HEK293 (cell line): ENCODE measurements at regions of chr20 and their contacts with region 1.

Region 1: GRCh38 chr20:45934586-45935415 is at the start of gene PCIF1:
- H3K4me3 ChIP-seq: peak within 1 kb of the TSS; percentile 96
- H3K27ac ChIP-seq: peak within 1 kb of the TSS; percentile 98
- H3K4me1 ChIP-seq: peaks cover 9% of the 10 kb centered on the region
- CTCF ChIP-seq: no peak; the same call in 1 of the 2 replicates

Region 2: DNA sequence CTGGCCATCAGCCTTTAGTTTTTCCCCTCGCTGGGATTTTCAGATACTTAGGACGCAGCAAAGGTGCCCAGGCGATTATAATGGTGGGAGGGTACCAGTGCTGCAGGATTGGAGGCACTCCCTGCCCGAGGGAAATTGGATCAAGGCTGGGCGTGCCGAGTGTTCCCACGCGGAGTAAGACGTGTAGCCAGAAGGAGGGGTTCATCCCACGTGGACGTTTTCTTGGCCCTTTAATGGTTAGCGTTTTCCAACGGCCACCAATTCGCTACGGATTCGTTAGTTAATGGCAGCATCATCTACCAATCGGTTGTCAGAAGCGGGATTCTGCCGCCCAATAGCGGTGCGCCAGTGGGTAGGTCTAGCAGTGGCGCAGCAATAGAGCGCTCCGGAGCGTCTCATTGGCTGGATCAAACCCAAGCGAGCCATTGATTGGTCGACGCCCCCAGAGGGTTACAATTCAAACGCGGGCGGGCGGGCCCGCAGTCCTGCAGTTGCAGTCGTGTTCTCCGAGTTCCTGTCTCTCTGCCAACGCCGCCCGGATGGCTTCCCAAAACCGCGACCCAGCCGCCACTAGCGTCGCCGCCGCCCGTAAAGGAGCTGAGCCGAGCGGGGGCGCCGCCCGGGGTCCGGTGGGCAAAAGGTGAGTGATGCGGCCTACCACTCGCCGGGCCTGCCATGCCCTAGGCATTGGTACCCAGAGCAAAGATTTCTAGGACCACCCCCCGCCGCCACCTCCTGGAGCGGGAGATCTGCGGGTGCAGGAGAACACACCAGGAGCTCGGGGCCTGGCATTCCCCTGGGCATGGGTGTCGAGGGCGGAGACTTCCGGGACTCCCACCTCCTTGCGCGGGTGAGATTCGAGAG is 122.4 kb before region 1 on chr20 and contains the start of gene UBE2C:
- CTCF ChIA-PET with region 1: no interaction called
- POLR2A ChIA-PET with region 1: interaction called, 13 read pairs
- H3K4me3 ChIP-seq: peak within 1 kb of the TSS; percentile 88
- H3K27ac ChIP-seq: peak within 1 kb of the TSS; percentile 88
- H3K4me1 ChIP-seq: peaks cover 3% of the 10 kb centered on the region; the same call in 1 of the 2 replicates
- CTCF ChIP-seq: no peak

Region 3: GRCh38 chr20:45890985-45891983 is 43.5 kb before region 1 on chr20 and contains the starts of genes CTSA and NEURL2:
- CTCF ChIA-PET with region 1: interaction called, 4 read pairs
- POLR2A ChIA-PET with region 1: interaction called, 16 read pairs
- H3K4me3 ChIP-seq: peak within 1 kb of the TSS; percentile 90
- H3K27ac ChIP-seq: no peak within 1 kb of the TSS; the same call in 1 of the 2 replicates
- H3K4me1 ChIP-seq: peaks cover 3% of the 10 kb centered on the region; the same call in 1 of the 2 replicates
- CTCF ChIP-seq: peak; percentile 59

Region 4: GRCh38 chr20:45924391-45925261 is 10.2 kb before region 1 on chr20:
- CTCF ChIA-PET with region 1: interaction called, 5 read pairs
- POLR2A ChIA-PET with region 1: interaction called, 21 read pairs
- H3K4me3 ChIP-seq: no peak overlapping the region
- H3K27ac ChIP-seq: no peak overlapping the region
- H3K4me1 ChIP-seq: no peaks in the 10 kb centered on the region
- CTCF ChIP-seq: no peak

Region 5: GRCh38 chr20:45959956-45960630 is 25.3 kb after region 1 on chr20:
- CTCF ChIA-PET with region 1: interaction called, 4 read pairs
- POLR2A ChIA-PET with region 1: interaction called, 15 read pairs
- H3K4me3 ChIP-seq: no peak overlapping the region
- H3K27ac ChIP-seq: no peak overlapping the region
- H3K4me1 ChIP-seq: no peaks in the 10 kb centered on the region
- CTCF ChIP-seq: no peak

Region 6: DNA sequence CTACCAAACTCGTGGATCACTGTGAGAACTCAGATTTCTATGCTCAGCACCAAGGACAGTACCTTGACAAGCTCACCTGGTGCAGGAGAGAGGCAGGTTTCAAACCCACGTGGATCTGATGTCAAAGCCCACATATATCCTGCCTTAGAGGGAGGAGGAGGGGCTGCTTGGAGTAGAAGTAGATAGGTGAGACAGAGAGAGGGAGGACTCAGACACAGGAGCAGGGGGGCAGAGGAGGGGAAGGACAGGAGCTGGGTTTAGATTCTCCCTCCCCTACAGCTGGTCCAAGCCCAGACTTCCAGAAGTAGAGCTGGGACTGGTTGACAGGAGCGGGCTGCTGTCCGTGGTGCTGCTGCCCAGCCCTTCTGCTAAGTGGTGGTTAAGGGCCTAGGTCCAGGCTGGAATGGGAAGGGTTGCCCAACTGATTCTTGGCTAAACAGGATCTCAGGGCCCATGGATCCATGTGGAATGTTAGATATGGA is 296.0 kb after region 1 on chr20:
- CTCF ChIA-PET with region 1: no interaction called
- POLR2A ChIA-PET with region 1: no interaction called
- H3K4me3 ChIP-seq: no peak overlapping the region
- H3K27ac ChIP-seq: no peak overlapping the region
- H3K4me1 ChIP-seq: no peaks in the 10 kb centered on the region
- CTCF ChIP-seq: no peak